CD8-positive, alpha-beta T cell (primary cell): ENCODE measurements at regions of chr16 and their contacts with region 1.

Region 1: GRCh38 chr16:77722309-77723107 is at the start of gene NUDT7:
- DNase-seq: peak; percentile 83 to 98 (median 96)
- ATAC-seq: peak; percentile 96
- H3K4me3 ChIP-seq: peak within 1 kb of the TSS; percentile 83 to 93
- H3K4me3 Mint-ChIP-seq: peak within 1 kb of the TSS; percentile 87
- H3K27ac ChIP-seq: peak within 1 kb of the TSS; percentile 45 to 57
- H3K27ac Mint-ChIP-seq: peak within 1 kb of the TSS; percentile 81
- H3K4me1 ChIP-seq: peaks cover 6% of the 10 kb centered on the region
- H3K4me1 Mint-ChIP-seq: peaks cover 13% of the 10 kb centered on the region
- H3K27me3 ChIP-seq: no peaks in the 10 kb centered on the region
- H3K27me3 Mint-ChIP-seq: peaks cover 2% of the 10 kb centered on the region
- CTCF ChIP-seq: no peak
- total RNA-seq, gene NUDT7: 0.42 to 1.0 TPM

Region 2: DNA sequence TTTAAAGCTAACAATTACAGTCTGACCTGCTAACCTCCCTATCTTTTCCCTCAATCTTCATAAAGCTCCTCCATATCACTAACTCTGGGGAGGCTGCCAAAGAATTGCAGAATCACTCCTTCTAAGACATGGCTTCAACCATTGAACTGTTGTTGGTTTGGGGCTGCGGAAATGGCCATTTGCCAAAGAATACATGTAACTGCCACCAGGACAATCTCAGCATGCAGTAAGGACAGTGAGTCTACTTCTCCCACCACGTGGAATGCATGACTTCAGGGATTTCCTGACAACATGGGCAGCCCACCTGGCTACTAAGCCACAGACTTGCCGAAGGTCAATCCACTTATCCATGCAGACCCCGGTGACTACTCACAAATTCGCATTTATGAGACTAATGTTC is 104.5 kb before region 1 on chr16:
- CTCF ChIA-PET with region 1: no interaction called
- POLR2A ChIA-PET with region 1: no interaction called
- intact Hi-C with region 1: no loop called
- DNase-seq: no peak
- ATAC-seq: no peak
- H3K4me3 ChIP-seq: no peak overlapping the region
- H3K4me3 Mint-ChIP-seq: no peak overlapping the region
- H3K27ac ChIP-seq: no peak overlapping the region
- H3K27ac Mint-ChIP-seq: no peak overlapping the region
- H3K4me1 ChIP-seq: no peaks in the 10 kb centered on the region
- H3K4me1 Mint-ChIP-seq: no peaks in the 10 kb centered on the region
- H3K27me3 ChIP-seq: no peaks in the 10 kb centered on the region
- H3K27me3 Mint-ChIP-seq: peaks cover 15% of the 10 kb centered on the region
- CTCF ChIP-seq: no peak

Region 3: DNA sequence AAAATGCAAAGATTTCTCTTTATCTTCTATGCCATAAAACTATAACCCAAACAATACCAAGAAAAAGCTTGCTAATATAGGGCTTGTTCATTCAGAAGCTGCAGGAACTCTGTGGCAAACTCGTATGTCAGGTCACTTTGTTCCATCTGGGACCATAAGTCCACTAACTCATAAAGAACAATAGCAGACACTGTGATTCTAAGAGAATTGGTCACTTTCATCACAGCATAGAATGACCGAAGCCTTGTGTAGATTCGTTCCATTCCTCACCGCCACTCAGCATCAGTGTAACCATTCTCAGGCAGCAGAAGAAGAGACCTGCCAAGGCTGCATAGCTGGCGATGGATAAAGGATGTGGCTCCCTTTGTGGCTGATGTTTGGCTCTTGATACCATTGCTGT is 35.5 kb after region 1 on chr16:
- CTCF ChIA-PET with region 1: no interaction called
- POLR2A ChIA-PET with region 1: no interaction called
- intact Hi-C with region 1: no loop called
- DNase-seq: no peak
- ATAC-seq: no peak
- H3K4me3 ChIP-seq: no peak overlapping the region
- H3K4me3 Mint-ChIP-seq: no peak overlapping the region
- H3K27ac ChIP-seq: no peak overlapping the region
- H3K27ac Mint-ChIP-seq: no peak overlapping the region
- H3K4me1 ChIP-seq: no peaks in the 10 kb centered on the region
- H3K4me1 Mint-ChIP-seq: no peaks in the 10 kb centered on the region
- H3K27me3 ChIP-seq: no peaks in the 10 kb centered on the region
- H3K27me3 Mint-ChIP-seq: peaks cover 12% of the 10 kb centered on the region
- CTCF ChIP-seq: no peak

Region 4: DNA sequence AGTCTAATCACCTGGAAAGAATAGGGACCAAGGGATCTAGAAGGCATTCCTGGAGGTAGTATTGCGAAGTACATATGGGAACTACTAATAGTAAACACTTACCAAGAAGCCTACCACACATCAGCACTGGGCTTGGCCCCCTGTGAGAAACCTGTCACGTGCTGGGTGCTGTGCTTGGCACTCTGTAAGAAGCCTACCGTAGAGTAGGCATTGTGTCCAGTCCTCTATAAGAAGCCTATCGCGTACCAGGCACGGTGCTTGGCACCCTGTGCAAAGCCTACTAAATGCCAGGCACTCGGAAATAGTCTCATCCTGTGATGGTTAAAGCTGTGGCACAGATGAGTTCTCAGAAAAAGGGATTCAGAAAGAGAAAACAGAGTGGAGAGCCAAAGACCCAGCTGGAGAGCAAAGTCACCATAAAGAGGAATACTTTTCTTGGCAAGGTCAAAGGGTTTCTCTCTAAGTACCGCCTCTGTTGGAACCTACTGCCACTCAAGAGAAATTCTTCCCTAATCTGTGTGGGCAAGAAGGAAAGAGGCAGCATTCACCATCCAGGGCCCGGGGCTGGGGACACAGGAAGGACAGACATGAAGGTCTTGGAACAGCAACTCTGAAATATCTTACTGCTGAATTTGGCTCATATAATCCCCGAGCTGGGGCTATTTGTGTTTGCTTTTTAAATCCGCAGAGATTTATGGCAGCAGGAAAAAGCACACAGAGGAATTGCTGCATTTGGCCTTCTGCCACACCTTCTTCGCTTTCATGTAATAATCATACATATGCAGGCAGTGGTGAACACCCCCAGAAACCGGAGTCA is 147.7 kb after region 1 on chr16:
- CTCF ChIA-PET with region 1: no interaction called
- POLR2A ChIA-PET with region 1: no interaction called
- intact Hi-C with region 1: no loop called
- DNase-seq: no peak
- ATAC-seq: no peak
- H3K4me3 ChIP-seq: no peak overlapping the region
- H3K4me3 Mint-ChIP-seq: no peak overlapping the region
- H3K27ac ChIP-seq: no peak overlapping the region
- H3K27ac Mint-ChIP-seq: no peak overlapping the region
- H3K4me1 ChIP-seq: no peaks in the 10 kb centered on the region
- H3K4me1 Mint-ChIP-seq: no peaks in the 10 kb centered on the region
- H3K27me3 ChIP-seq: no peaks in the 10 kb centered on the region
- H3K27me3 Mint-ChIP-seq: peaks cover 5% of the 10 kb centered on the region
- CTCF ChIP-seq: no peak

Region 5: GRCh38 chr16:78099372-78100161 is 377.1 kb after region 1 on chr16 and contains the start of gene WWOX:
- CTCF ChIA-PET with region 1: interaction called, 3 read pairs
- POLR2A ChIA-PET with region 1: interaction called, 5 read pairs
- intact Hi-C with region 1: loop called in 1 of 2 experiments (anchors 5 kb)
- DNase-seq: peak; percentile 90 to 99 (median 95)
- ATAC-seq: peak; percentile 95
- H3K4me3 ChIP-seq: peak within 1 kb of the TSS; percentile 95
- H3K4me3 Mint-ChIP-seq: peak within 1 kb of the TSS; percentile 92
- H3K27ac ChIP-seq: peak within 1 kb of the TSS; percentile 81 to 94
- H3K27ac Mint-ChIP-seq: peak within 1 kb of the TSS; percentile 92
- H3K4me1 ChIP-seq: peaks cover 17% of the 10 kb centered on the region
- H3K4me1 Mint-ChIP-seq: peaks cover 33% of the 10 kb centered on the region
- H3K27me3 ChIP-seq: no peaks in the 10 kb centered on the region
- H3K27me3 Mint-ChIP-seq: no peaks in the 10 kb centered on the region
- CTCF ChIP-seq: peak; percentile 92
- total RNA-seq, gene WWOX: 19.8 to 24.1 TPM